ENCODE measurements at regions of chr2 and their contacts with region 1.

Region 1: GRCh38 chr2:200306196-200306930 is at the start of gene SPATS2L:
- DNase-seq: peak; percentile 83 to 94 (median 88)
- H3K4me3 ChIP-seq: peak within 1 kb of the TSS; percentile 78 to 86 (median 79)
- H3K27ac ChIP-seq: peak within 1 kb of the TSS; percentile 81 to 90
- H3K4me1 ChIP-seq: peaks cover 0 to 7% (median 5%) of the 10 kb centered on the region in 3 donors
- H3K27me3 ChIP-seq: no peaks in the 10 kb centered on the region
- CTCF ChIP-seq: no peak
- total RNA-seq, gene SPATS2L: 166 TPM

Region 2: GRCh38 chr2:200156166-200156835 is 150.1 kb before region 1 on chr2:
- intact Hi-C with region 1: no loop called
- DNase-seq: no peak
- H3K4me3 ChIP-seq: peak overlapping the region in 2 of 3 donors; percentile 2 to 23
- H3K27ac ChIP-seq: no peak overlapping the region
- H3K4me1 ChIP-seq: no peaks in the 10 kb centered on the region
- H3K27me3 ChIP-seq: no peaks in the 10 kb centered on the region
- CTCF ChIP-seq: no peak

Region 3: GRCh38 chr2:200483729-200484198 is 177.4 kb after region 1 on chr2:
- intact Hi-C with region 1: loop called (anchors 10 kb)
- DNase-seq: peak in 4 of 5 donors; percentile 38 to 63 (median 59)
- H3K4me3 ChIP-seq: no peak overlapping the region
- H3K27ac ChIP-seq: no peak overlapping the region
- H3K4me1 ChIP-seq: no peaks in the 10 kb centered on the region
- H3K27me3 ChIP-seq: no peaks in the 10 kb centered on the region
- CTCF ChIP-seq: peak; percentile 32

Region 4: GRCh38 chr2:200585730-200586643 is 279.6 kb after region 1 on chr2 and contains the start of gene AOX1:
- intact Hi-C with region 1: no loop called
- DNase-seq: peak; percentile 67 to 82 (median 77)
- H3K4me3 ChIP-seq: peak within 1 kb of the TSS; percentile 56 to 85 (median 59)
- H3K27ac ChIP-seq: peak within 1 kb of the TSS; percentile 37 to 90
- H3K4me1 ChIP-seq: peaks cover 0 to 4% (median 0%) of the 10 kb centered on the region in 3 donors
- H3K27me3 ChIP-seq: no peaks in the 10 kb centered on the region
- CTCF ChIP-seq: no peak
- total RNA-seq, gene AOX1: 38.6 TPM

Region 5: DNA sequence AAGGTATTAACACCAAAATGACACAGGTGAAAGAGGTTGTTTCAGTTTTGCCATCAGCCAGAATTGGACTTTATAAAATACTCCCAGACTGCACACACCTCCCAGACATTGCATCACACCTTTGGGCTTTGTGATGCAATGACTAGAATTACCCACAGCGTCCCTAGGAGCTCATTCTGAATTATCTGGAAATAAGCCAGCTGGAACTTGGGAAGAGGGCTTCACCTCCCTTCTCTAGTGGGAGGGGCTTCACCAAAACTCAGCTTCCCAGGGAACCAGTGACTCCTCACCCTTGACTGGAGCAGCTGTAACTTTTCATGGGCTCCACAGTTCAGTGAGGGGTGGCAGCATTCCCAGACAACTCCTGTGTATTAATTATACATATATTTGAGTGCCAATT is 422.3 kb after region 1 on chr2:
- intact Hi-C with region 1: no loop called
- DNase-seq: peak in 3 of 5 donors; percentile 60 to 83 (median 64)
- H3K4me3 ChIP-seq: no peak overlapping the region
- H3K27ac ChIP-seq: no peak overlapping the region
- H3K4me1 ChIP-seq: no peaks in the 10 kb centered on the region
- H3K27me3 ChIP-seq: no peaks in the 10 kb centered on the region
- CTCF ChIP-seq: no peak

Measured in kidney (tissue), 22 donors.